Stomach (tissue), 19 donors: ENCODE measurements at regions of chr22 and their contacts with region 1.

Region 1: GRCh38 chr22:19730655-19731360 is 7.5 kb downstream of the GP1BB start:
- DNase-seq: peak; percentile 84 to 93
- H3K4me3 ChIP-seq: peak overlapping the region; percentile 34 to 47 (median 40)
- H3K27ac ChIP-seq: no peak overlapping the region
- H3K4me1 ChIP-seq: peaks cover 6 to 12% (median 11%) of the 10 kb centered on the region in 4 donors
- H3K27me3 ChIP-seq: peaks cover 0 to 37% (median 4%) of the 10 kb centered on the region in 3 donors
- CTCF ChIP-seq: peak in 6 of 7 experiments; percentile 72 to 96 (median 92)
- EP300 ChIP-seq: no peak
- POLR2A ChIP-seq: no peak

Region 2: GRCh38 chr22:19663286-19663815 is 67.5 kb before region 1 on chr22:
- intact Hi-C with region 1: no loop called
- DNase-seq: peak; percentile 80 to 89
- H3K4me3 ChIP-seq: no peak overlapping the region
- H3K27ac ChIP-seq: no peak overlapping the region
- H3K4me1 ChIP-seq: peaks cover 0 to 13% (median 5%) of the 10 kb centered on the region in 4 donors
- H3K27me3 ChIP-seq: peaks cover 0 to 12% (median 0%) of the 10 kb centered on the region in 3 donors
- CTCF ChIP-seq: no peak
- EP300 ChIP-seq: no peak
- POLR2A ChIP-seq: no peak

Region 3: DNA sequence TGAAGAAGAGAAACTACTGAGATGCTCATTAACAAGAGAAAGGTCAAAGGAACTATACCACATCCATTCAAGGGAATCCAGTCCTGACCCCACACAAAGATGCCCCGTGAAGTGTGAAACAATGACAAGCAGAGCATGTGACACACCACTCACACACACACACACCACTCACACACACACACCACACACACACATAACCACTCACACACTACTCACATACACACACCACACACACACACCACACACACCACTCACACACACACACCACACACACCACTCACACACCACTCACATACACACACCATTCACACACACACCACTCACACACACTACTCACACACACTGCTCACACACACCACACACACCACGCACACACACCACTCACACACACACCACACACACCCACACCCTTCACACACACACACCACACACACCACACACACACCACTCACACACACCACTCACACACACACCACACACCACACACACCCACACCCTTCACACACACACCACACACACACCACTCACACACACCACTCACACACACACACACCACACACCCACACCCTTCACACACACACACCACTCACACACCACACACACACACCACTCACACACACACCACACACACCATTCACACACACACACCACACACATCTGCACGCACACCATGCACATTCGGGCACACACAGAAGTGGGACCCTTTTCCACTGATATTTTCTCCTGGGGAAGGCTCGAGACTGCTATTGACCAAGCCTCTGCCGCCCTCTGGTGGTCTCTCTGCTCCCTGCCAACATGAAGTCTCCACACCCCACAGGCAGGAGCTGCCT is 178.8 kb after region 1 on chr22:
- intact Hi-C with region 1: loop called (anchors 5 kb)
- DNase-seq: peak; percentile 89 to 92
- H3K4me3 ChIP-seq: no peak overlapping the region
- H3K27ac ChIP-seq: no peak overlapping the region
- H3K4me1 ChIP-seq: peaks cover 0 to 17% (median 16%) of the 10 kb centered on the region in 4 donors
- H3K27me3 ChIP-seq: no peaks in the 10 kb centered on the region
- CTCF ChIP-seq: peak in 5 of 7 experiments; percentile 83 to 92 (median 88)
- EP300 ChIP-seq: no peak
- POLR2A ChIP-seq: no peak